Cardiac septum (tissue), 1 donor: ENCODE measurements at regions of chr14 and their contacts with region 1.

Region 1: GRCh38 chr14:69005432-69006147 is 26.5 kb upstream of the ACTN1 start:
- DNase-seq: peak; percentile 86

Region 2: DNA sequence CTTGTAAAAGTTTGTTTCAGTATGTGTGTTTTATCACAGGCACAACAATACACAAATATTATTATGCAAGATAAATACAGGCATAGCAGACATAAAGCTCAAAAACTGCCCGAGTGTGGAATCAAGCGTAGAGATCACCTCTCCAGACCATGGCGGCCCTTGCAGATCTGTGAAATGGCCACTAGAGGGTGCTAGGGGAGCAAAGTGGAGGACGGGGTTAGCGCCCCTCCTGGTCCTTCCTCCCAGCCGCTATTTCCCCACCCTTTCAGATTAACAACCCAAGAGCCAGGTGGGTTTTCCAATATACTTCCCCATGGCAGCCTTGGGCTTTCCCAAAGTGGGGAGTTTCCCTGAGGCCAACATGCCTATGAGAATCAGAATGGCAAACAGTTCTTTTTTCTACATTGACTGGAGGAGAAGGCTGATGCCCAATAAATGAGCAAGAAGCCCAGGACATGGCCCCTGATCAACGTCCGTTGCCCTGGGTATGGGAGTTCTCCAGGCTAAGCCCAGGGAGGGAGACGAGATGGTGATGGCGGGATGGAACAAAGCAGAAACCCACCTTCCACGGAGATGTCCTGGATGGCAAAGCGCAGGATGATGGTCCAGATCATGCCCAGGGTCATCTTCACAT is 93.9 kb before region 1 on chr14:
- intact Hi-C with region 1: loop called (anchors 5 kb)
- DNase-seq: peak; percentile 86

Region 3: DNA sequence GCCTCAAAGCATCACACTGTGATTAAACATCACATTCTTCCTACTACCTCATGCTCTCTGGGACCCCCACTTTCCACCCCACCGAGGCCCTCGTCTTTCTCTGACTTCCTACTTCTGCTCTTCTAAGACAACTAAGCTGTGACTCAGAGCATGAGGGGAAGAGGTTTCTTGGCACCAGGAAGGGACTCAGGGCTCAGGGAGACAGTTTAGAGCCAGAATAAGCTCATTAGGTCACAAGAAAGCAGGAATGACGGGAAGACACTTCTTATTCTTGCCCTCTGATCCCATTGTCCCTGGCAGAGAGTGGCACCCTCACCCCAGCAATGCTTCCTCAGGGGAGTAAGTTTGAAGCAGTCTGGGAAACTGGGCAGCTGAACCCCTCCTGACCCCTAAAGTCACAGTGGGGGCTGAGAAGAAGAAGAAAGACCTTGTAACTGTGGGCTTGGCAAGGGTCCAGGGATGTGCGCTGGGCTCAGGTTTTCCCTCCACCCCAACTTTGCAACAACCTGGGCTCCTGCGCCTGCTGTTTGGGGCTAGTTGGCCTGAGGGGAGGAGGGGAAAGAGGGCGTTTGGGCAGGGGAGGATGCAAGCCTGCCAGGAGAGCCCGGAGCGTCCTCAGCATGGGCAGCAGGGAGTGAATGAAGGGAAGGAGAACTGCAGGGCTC is 38.1 kb after region 1 on chr14:
- intact Hi-C with region 1: loop called (anchors 5 kb)
- DNase-seq: no peak

Region 4: DNA sequence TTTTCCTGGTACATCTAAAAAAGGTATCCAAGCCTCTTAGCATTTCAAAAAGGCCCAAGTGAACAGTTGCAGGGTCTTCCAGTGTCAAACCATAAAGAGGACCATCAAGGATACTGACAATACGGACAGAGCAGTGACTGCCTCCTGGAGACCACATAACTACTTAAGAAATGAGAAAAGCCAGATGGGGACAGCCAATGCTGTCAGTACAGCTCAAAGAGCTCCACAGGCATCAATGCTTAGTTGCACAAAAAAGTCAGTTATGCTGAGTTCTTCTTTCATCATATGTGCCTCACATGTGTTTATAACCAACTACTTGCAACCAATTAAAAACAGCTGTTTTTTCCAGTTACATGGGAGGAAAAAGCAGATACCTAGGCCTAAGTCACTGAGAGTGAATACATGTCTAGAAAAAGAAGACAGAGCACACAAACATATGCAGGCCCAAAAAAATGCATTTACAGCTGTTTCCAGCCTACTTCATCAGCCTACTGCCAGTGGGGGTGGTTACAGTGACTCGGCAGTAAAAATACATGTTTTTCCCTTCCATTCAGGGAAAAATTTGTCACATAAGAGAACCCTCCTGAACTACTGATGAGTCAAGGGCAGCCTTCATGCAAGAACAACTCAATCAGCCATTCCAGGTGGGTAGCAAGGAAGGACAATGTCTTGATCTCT is 63.3 kb after region 1 on chr14:
- intact Hi-C with region 1: no loop called
- DNase-seq: no peak